Natural killer cell (primary cell): ENCODE measurements at regions of chr11 and their contacts with region 1.

Region 1: GRCh38 chr11:34997952-34998528 is 81.6 kb downstream of the PDHX start:
- DNase-seq: peak in 1 of 2 donors; percentile 54
- ATAC-seq: peak in 2 of 3 donors; percentile 53 to 63
- H3K4me3 ChIP-seq: no peak overlapping the region
- H3K4me3 Mint-ChIP-seq: no peak overlapping the region
- H3K27ac ChIP-seq: peak overlapping the region; percentile 15
- H3K27ac Mint-ChIP-seq: peak overlapping the region; percentile 8 to 56
- H3K4me1 ChIP-seq: no peaks in the 10 kb centered on the region
- H3K4me1 Mint-ChIP-seq: peaks cover 6 to 7% of the 10 kb centered on the region in 2 donors
- H3K27me3 ChIP-seq: no peaks in the 10 kb centered on the region
- H3K27me3 Mint-ChIP-seq: no peaks in the 10 kb centered on the region
- CTCF ChIP-seq: peak; percentile 91

Region 2: GRCh38 chr11:35082321-35083182 is 84.5 kb after region 1 on chr11:
- intact Hi-C with region 1: loop called (anchors 5 kb)
- DNase-seq: peak; percentile 69 to 95
- ATAC-seq: peak; percentile 62 to 88 (median 78)
- H3K4me3 ChIP-seq: peak overlapping the region; percentile 2
- H3K4me3 Mint-ChIP-seq: peak overlapping the region; percentile 76
- H3K27ac ChIP-seq: peak overlapping the region; percentile 96
- H3K27ac Mint-ChIP-seq: peak overlapping the region; percentile 87 to 94
- H3K4me1 ChIP-seq: peaks cover 65% of the 10 kb centered on the region
- H3K4me1 Mint-ChIP-seq: peaks cover 66 to 75% of the 10 kb centered on the region in 2 donors
- H3K27me3 ChIP-seq: no peaks in the 10 kb centered on the region
- H3K27me3 Mint-ChIP-seq: peaks cover 0 to 6% of the 10 kb centered on the region in 2 donors
- CTCF ChIP-seq: no peak

Region 3: DNA sequence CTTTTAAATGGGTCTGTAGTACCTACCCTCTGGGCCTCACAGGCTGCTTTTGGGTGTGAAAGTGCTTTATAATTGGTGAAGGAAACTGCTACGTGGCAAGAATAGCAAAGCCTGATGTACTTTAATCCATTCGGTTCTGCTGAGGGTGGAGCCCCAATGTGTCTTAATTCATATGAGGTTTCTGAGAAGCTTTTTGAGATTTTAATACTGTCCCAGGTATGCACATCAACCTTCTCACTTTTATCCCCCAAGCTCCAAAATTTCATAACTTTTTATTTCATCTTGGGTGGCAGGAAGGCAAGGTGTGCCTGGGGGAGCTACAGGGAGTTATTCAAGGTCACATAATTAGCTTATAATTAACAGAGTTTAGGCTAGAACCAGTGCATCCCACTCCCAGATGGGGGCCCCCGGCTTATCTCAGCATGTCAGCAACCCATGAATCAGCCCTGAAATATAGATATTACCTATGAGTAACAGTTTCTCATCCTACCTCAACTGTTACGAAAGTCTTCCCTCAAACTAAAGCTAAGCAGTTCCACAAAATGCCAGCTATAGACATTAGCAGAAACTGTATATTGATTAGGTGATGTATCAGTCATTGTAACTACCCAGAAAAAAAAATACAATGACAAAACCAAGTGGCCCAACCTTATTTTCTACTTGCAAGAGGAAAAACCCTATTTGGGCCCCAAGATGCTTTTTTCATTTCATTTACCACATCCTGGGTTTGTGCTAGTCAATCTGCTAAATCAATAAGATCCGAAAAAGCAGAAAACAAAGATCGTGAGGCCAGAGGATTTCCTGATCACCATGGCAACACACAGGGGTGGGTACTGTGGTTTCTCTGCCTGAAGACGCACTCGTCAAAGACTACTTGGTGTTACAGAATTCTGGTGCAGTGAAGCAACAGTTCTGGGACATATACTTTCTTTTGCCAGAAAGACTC is 167.7 kb after region 1 on chr11:
- intact Hi-C with region 1: loop called (anchors 5 kb)
- DNase-seq: peak; percentile 85 to 98
- ATAC-seq: peak; percentile 69 to 89 (median 88)
- H3K4me3 ChIP-seq: peak overlapping the region; percentile 21
- H3K4me3 Mint-ChIP-seq: peak overlapping the region; percentile 90
- H3K27ac ChIP-seq: peak overlapping the region; percentile 99
- H3K27ac Mint-ChIP-seq: peak overlapping the region; percentile 90 to 99
- H3K4me1 ChIP-seq: peaks cover 68% of the 10 kb centered on the region
- H3K4me1 Mint-ChIP-seq: peaks cover 97% of the 10 kb centered on the region in 2 donors
- H3K27me3 ChIP-seq: no peaks in the 10 kb centered on the region
- H3K27me3 Mint-ChIP-seq: no peaks in the 10 kb centered on the region
- CTCF ChIP-seq: no peak

Region 4: DNA sequence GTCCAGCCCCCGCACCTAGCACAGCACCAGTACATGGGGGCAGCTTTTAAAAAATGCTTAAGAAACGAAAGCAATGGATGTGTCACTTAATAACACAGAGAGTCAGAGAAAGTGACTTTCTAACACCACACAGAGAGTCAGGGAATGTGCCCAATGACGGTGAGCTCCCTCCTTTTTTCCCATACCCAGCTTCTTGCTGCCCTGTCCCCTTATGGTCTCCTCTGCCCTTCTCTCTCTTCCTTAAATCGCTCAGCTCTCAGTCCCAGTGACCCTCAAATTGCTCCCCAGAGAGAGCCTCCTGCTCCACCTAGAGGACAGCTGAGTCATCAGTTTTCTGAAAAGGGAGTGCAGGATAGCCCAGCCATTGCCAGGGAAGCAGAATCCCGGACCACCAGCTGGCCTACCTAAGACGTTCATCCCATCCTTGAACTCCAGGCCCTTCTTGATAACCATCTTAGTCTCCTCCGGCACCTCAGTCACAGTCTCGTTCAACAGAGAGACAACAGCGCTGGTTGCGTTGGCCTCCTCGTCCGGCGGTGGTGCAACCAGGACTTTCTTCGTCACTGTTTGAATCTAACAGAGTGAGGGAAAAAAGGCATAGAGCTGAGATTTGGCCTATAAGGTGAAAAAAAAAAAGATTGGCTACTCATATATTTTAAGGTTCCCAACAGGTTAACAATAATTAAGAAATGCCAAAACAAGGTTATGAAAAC is 307.8 kb after region 1 on chr11:
- intact Hi-C with region 1: loop called (anchors 5 kb)
- DNase-seq: peak in 1 of 2 donors; percentile 76
- ATAC-seq: peak; percentile 36 to 70 (median 63)
- H3K4me3 ChIP-seq: no peak overlapping the region
- H3K4me3 Mint-ChIP-seq: peak overlapping the region; percentile 28
- H3K27ac ChIP-seq: no peak overlapping the region
- H3K27ac Mint-ChIP-seq: no peak overlapping the region
- H3K4me1 ChIP-seq: peaks cover 17% of the 10 kb centered on the region
- H3K4me1 Mint-ChIP-seq: peaks cover 5 to 6% of the 10 kb centered on the region in 2 donors
- H3K27me3 ChIP-seq: no peaks in the 10 kb centered on the region
- H3K27me3 Mint-ChIP-seq: peaks cover 4 to 13% of the 10 kb centered on the region in 2 donors
- CTCF ChIP-seq: peak; percentile 29